Dorsolateral prefrontal cortex (tissue), 120 donors: ENCODE measurements at regions of chr13 and their contacts with region 1.

Region 1: DNA sequence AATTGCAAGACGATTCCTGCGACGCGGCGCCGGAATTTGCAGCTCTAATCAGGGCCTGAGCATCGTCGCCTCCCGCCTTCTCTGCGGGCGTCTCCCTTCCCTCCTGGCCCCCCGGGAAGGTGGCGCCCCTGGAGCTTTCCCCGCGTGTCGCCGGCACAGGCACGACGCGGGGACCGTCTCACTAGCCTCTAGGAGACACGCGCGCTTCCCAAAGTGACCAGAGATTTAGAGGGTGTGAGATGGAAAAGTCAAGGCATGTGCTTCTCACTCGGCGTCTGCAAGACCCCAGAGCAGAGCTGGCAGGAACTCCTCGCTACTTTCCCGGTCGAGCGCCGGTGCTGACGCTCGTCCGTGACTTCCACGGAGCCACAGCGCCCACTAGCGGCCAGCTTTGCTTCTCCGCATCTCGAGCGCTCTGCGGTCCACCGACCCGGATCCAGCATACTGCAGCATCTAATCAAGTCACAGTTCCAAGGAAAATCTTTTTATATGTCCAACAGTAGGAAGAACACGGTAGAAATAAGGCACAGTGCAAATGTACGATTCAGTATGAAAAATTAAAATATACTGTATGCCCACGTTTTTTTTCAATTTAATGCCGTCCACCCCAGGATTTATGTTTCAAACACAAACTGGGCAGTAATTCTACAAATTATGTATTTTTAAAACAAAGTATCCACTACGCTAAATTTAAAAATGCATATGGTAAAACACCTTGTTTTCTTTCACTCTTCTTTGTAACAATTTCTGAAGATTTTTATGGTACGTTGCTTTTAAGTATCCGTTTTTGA is 977 bp upstream of the EFNB2 start:
- DNase-seq: peak; percentile 84 to 95 (median 93)
- H3K4me3 ChIP-seq: peak overlapping the region; percentile 63 to 94 (median 83)
- H3K27ac ChIP-seq: peak overlapping the region; percentile 37 to 95 (median 85)
- H3K27me3 ChIP-seq: no peaks in the 10 kb centered on the region
- CTCF ChIP-seq: peak; percentile 81 to 99 (median 96)

Region 2: DNA sequence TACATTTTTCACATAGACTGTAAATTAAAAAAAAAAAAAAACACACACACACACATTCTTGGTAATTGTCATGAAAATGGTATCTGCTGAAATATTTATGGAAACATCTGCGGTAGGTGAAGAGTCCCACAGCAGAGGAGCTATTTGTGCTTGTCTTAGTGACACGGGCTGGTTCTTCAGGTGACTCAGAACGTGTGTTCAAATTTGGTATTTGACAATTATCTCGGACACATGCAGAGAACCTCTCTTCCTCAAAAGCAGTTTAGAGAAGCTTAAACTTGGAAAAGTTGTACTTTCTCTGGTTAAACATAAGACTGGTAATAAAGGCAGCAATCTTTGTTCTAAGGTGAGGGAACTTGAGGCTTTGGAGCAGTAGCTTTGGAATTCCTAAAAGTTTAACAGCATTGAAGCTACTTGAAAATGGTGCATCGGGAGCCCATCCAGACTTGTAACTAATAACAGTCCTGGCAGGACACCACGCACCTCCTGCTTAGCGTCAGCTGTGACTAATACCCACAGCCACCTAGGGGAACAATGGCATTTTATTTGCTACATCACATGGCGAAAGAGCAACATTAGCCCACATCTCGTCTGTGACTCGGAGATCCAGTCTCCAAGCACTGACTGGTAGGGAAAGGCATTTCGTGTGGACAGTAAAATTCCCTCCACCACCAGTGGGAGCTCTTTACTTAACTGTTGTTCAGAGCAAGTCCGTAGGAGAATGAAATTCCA is 1965.1 kb before region 1 on chr13:
- intact Hi-C with region 1: loop called (anchors 5 kb)
- DNase-seq: peak in 9 of 10 donors; percentile 52 to 93 (median 70)
- H3K4me3 ChIP-seq: peak overlapping the region in 48 of 59 donors; percentile 4 to 55 (median 32)
- H3K27ac ChIP-seq: peak overlapping the region in 12 of 59 donors; percentile 2 to 74 (median 40)
- H3K27me3 ChIP-seq: no peaks in the 10 kb centered on the region
- CTCF ChIP-seq: peak; percentile 54 to 87 (median 78)

Region 3: DNA sequence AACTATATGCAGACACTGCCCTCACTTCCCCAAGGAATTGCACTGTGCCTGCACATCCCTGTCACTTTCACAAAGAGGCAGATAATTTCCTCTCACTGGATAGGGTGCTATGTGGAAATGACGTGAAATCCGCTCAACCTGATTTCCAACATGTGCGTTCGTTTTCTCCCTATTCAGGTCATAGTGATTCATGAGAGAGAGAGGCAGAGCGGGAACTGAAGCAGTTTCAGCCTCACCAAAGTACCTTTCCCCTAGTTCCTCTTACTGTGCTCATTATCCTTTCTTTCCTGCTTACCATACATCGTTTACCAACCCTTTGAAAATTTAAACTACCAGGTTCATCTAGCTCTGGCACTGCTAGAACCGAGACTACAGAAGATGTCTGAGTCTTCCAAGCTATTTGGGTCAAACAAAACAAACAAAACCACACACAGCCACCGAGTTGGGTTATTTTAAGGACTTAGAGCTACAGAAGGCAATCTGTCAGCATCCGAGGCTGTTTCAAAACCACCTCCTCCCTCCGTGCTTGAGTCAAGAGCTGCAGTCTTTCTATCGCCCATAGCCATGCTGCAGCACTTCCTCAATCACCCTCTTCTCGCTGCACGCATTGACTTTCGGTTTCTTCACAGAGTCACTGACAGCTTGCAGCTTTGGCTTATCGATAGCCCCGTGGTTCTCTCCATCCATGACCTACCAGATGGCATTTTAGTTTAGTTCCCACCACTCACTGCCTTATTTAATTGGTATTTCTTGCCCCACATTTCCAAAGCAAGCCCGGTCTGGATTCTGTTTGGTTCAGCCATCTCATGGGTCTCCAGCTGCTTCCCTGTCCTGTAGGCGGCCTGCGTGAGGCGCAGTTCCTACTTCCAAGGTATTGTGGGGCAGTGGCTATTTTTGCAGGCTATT is 1396.8 kb before region 1 on chr13:
- intact Hi-C with region 1: loop called in 1 of 2 experiments (anchors 10 kb)
- DNase-seq: peak in 9 of 10 donors; percentile 23 to 63 (median 55)
- H3K4me3 ChIP-seq: peak overlapping the region in 56 of 59 donors; percentile 7 to 64 (median 44)
- H3K27ac ChIP-seq: peak overlapping the region in 56 of 59 donors; percentile 0 to 88 (median 70)
- H3K27me3 ChIP-seq: no peaks in the 10 kb centered on the region
- CTCF ChIP-seq: peak in 28 of 56 donors; percentile 14 to 39 (median 26)

Region 4: DNA sequence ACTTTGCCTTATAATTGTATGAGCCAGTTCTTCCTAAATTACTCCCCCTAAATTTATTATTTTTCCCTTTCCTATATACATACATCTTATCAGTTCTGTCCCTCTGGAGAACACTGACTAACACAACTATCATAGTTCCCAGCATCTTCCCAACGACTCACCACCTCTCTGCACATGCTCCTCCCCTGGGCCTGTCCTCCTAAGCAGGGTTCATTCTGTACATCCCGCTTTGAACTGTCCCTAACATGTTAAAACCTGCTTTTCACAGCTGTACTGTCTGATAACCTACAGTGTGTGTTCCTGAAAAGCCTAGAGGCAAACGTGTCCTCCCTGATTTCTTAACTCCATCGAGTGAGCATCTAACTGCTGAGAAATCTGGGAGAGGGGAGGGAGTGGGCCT is 142.7 kb before region 1 on chr13:
- intact Hi-C with region 1: no loop called
- DNase-seq: no peak
- H3K4me3 ChIP-seq: no peak overlapping the region
- H3K27ac ChIP-seq: no peak overlapping the region
- H3K27me3 ChIP-seq: no peaks in the 10 kb centered on the region
- CTCF ChIP-seq: no peak

Region 5: GRCh38 chr13:106567474-106568298 is 31.2 kb after region 1 on chr13 and contains the start of gene ARGLU1:
- intact Hi-C with region 1: loop called (anchors 2 to 5 kb)
- DNase-seq: peak; percentile 80 to 94 (median 90)
- H3K4me3 ChIP-seq: peak within 1 kb of the TSS; percentile 56 to 97 (median 87)
- H3K27ac ChIP-seq: peak within 1 kb of the TSS; percentile 81 to 100 (median 97)
- H3K27me3 ChIP-seq: no peaks in the 10 kb centered on the region
- CTCF ChIP-seq: peak in 36 of 56 donors; percentile 5 to 51 (median 28)
- total RNA-seq, gene ARGLU1: 101 to 209 (median 139) TPM

Region 6: DNA sequence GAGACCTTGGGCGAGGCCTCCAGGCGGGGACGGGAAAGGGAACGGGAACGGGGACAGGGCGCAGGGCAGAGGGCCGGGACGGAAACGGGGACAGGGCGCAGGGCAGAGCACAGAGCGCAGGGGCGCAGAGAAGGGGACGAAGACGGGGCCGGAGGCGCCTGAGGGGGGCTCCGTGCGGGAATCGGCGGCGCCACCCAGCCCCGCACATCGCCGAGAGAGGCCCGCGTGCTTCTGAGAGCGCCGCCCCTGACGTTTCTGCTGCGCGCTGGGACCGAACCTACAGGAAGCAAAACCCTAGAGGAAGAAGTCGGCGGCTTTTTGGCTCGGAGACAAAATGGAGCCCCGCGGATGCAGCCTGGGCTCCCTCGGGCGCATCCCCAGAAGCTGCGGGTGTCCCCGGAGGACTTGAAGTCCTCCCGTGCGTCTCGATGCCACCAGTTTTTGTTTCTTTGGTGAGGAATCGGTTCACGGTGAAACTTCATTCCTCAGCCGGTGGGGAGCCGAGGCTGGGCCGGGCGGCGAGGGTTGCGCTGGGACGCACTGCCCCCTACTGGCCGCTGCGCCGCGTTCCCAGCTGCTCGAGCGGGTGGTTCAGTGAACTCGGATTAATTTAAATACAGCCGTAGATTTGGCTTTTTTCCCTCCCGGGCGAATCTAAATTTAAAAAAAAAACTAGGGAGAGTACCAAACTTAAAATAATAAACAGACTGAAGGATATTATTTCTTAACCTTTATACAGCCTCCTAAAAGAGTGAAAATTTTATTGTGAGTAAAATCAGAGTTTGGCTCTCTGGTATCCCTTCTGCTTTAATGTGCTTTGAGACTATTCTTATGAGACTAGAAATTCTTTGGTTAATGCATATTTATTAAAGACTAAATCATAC is 381.5 kb after region 1 on chr13:
- intact Hi-C with region 1: loop called (anchors 1 to 2 kb)
- DNase-seq: peak; percentile 42 to 89 (median 73)
- H3K4me3 ChIP-seq: peak overlapping the region; percentile 41 to 91 (median 74)
- H3K27ac ChIP-seq: peak overlapping the region; percentile 58 to 97 (median 88)
- H3K27me3 ChIP-seq: no peaks in the 10 kb centered on the region
- CTCF ChIP-seq: peak; percentile 85 to 99 (median 95)